HEK293 (cell line): ENCODE measurements at regions of chr9 and their contacts with region 1.

Region 1: DNA sequence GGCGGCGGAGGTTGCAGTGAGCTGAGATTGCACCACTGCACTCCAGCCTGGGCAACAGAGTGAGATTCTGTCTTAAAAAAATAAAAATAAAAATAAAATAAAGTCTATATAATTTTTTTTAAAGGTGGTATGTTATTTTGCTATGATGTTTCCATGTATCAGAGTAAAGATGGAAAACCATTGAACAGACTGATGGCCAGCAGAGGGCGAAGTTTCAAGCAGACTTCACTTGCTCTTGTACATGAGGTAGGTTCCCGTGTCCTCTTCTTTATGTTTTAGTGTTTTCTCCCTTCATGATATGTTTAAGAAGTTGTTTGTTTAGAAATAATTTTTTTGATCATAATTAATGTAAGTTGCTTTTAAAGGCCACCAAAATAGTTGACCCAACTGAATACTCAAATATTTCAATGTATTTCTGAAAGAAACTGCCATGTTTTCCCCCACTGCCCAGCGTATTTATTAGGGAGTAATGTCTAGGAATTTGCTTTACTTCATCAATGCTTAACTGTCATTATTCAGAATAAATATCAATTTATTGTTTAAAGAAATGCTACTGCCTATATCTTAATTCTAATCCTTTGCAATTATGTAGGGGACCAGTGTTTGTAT is 146.4 kb downstream of the HACD4 start:
- H3K4me3 ChIP-seq: no peak overlapping the region
- H3K27ac ChIP-seq: no peak overlapping the region
- H3K4me1 ChIP-seq: no peaks in the 10 kb centered on the region
- CTCF ChIP-seq: no peak

Region 2: GRCh38 chr9:20848490-20848889 is 36.6 kb before region 1 on chr9:
- CTCF ChIA-PET with region 1: no interaction called
- POLR2A ChIA-PET with region 1: no interaction called
- H3K4me3 ChIP-seq: no peak overlapping the region
- H3K27ac ChIP-seq: no peak overlapping the region
- H3K4me1 ChIP-seq: no peaks in the 10 kb centered on the region
- CTCF ChIP-seq: no peak

Region 3: GRCh38 chr9:20872340-20872977 is 12.6 kb before region 1 on chr9:
- CTCF ChIA-PET with region 1: interaction called, 23 read pairs
- POLR2A ChIA-PET with region 1: no interaction called
- H3K4me3 ChIP-seq: no peak overlapping the region
- H3K27ac ChIP-seq: no peak overlapping the region
- H3K4me1 ChIP-seq: no peaks in the 10 kb centered on the region
- CTCF ChIP-seq: no peak

Region 4: DNA sequence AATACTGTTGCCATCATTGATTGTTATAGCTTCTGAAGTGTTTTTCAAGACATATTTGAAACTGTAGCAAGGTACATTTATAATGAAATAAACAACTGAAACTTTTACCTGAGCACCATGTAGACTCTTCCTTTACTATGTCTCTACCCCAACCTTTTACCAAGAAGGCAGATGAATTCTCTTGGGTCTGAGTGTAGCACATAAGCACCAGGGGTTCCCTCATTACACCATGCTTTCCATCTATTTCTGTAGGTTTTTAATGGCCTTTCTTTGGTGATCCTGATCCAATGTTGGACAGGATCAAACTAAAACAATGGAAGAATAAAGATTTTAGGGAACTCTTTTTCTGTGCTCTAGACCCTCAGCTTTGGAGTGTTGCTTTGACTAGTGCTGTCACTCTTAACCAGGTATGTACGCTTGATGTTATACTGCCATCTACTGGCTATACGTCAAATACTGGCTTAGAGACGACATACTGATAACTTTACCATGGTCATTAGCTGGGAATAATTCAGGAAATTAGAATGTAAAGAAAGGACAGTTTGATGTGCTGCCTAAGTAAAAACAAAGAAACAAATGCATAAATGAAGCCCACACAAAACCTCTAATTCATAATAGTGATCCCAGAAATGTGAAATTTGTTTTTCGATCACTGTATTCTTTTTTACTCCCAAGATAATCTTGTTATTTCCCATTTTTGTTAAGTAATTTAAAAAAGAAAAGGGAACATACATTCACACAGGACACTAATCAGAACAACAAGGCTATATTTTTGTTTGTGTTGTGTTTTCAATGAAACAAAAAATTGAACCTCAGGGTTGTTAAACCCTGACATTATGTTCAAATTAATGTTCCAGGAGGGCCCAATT is 225.9 kb after region 1 on chr9:
- CTCF ChIA-PET with region 1: interaction called, 18 read pairs
- POLR2A ChIA-PET with region 1: no interaction called
- H3K4me3 ChIP-seq: no peak overlapping the region
- H3K27ac ChIP-seq: no peak overlapping the region
- H3K4me1 ChIP-seq: no peaks in the 10 kb centered on the region
- CTCF ChIP-seq: peak; percentile 65